CD4-positive, alpha-beta T cell (primary cell): ENCODE measurements at regions of chr19 and their contacts with region 1.

Region 1: DNA sequence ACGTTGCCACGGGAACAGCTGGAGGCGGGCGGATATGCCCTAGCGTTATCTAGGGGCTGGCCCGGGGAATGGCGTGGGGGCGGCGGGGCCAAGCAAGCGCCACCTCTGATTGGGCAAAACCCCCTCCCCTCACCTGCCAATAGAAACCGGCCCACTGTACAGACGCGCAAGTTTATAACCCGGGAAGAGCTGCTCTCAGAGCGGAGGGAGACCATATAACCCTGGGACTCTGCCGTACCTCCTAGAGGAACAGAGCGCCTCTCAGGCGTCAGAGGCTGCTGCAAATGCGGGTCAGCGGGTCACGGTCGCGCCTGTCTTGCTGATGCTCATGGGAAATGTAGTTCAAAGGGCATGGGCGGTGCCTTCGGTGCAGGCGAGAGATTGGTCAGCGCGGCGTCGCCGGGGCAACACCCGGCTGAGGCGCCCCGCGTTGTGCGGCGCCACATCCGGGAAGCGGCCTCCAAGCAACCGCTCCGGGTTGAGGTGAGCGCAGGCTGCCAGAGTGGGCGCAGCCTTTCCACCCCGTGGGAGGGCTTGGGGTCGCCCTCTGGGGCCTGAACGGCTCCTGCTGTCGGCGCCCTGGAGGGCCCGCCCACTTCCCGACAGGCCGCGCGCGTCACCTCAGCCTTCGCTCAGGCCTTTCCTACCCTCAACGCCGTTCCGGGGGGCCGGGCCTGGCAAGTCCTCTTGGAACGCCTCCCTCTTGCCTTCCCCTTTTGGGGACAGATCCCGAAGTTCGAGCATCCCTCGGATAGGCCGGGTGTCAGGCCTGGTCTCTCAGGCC is at the start of gene ZNF446:
- DNase-seq: peak; percentile 90 to 99 (median 94)
- ATAC-seq: peak; percentile 82
- H3K4me3 ChIP-seq: peak within 1 kb of the TSS; percentile 87
- H3K4me3 Mint-ChIP-seq: peak within 1 kb of the TSS; percentile 90
- H3K27ac ChIP-seq: peak within 1 kb of the TSS; percentile 76 to 95
- H3K27ac Mint-ChIP-seq: peak within 1 kb of the TSS; percentile 95
- H3K4me1 ChIP-seq: peaks cover 22% of the 10 kb centered on the region
- H3K4me1 Mint-ChIP-seq: peaks cover 23% of the 10 kb centered on the region
- H3K27me3 ChIP-seq: no peaks in the 10 kb centered on the region
- H3K27me3 Mint-ChIP-seq: no peaks in the 10 kb centered on the region
- CTCF ChIP-seq: no peak
- total RNA-seq, gene ZNF446: 13.6 to 14.6 TPM

Region 2: DNA sequence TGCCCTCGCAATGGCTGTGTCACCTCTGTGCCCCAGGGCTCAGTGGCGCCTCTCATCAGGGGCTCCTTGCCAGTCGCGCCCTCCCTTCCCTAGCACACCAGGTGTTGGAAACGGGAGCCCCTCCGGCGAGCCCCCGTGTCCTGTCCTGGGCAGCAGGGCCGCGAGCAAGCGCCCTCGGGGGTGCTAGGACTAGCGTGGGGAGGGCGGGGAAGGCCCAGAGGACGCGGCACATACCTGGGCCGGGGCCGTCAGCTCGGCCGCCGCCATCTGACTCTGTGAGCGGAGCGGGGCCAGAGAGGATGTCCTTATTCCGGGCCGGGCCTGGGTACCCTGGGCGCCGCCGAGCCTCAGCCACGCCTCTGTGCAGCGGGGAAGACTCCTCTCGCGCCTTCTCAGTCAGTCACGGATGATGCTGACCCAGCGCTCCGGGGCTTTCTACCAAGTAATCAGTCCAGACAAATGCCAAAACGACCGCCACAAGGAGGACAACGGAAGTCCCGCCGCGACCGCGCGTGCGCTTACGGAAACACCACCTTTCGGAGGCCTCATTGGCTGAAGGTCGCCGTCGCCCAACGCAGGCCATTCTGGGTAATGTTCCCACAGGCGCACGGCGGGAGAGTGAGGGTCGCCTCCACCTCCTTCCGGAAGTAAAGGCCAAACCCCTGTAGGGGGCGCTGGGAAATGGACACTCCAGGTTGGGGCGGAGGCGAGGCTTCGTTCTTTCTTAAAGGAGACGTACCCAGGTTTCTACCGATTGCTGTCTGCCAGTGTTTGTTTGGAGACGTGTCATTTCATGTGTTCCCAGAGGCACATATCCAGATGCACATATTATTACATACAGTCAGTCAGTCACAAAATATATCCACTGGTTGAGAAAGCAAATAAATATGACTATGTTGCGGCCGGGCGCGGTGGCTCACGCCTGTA is 528.4 kb before region 1 on chr19 and contains the start of gene ZNF256:
- CTCF ChIA-PET with region 1: no interaction called
- POLR2A ChIA-PET with region 1: no interaction called
- intact Hi-C with region 1: no loop called
- DNase-seq: peak; percentile 65 to 93 (median 82)
- ATAC-seq: peak; percentile 88
- H3K4me3 ChIP-seq: peak within 1 kb of the TSS; percentile 85
- H3K4me3 Mint-ChIP-seq: peak within 1 kb of the TSS; percentile 94
- H3K27ac ChIP-seq: peak within 1 kb of the TSS; percentile 61 to 82
- H3K27ac Mint-ChIP-seq: peak within 1 kb of the TSS; percentile 88
- H3K4me1 ChIP-seq: peaks cover 17% of the 10 kb centered on the region
- H3K4me1 Mint-ChIP-seq: peaks cover 21% of the 10 kb centered on the region
- H3K27me3 ChIP-seq: no peaks in the 10 kb centered on the region
- H3K27me3 Mint-ChIP-seq: no peaks in the 10 kb centered on the region
- CTCF ChIP-seq: peak; percentile 31
- total RNA-seq, gene ZNF256: 15.2 TPM

Region 3: DNA sequence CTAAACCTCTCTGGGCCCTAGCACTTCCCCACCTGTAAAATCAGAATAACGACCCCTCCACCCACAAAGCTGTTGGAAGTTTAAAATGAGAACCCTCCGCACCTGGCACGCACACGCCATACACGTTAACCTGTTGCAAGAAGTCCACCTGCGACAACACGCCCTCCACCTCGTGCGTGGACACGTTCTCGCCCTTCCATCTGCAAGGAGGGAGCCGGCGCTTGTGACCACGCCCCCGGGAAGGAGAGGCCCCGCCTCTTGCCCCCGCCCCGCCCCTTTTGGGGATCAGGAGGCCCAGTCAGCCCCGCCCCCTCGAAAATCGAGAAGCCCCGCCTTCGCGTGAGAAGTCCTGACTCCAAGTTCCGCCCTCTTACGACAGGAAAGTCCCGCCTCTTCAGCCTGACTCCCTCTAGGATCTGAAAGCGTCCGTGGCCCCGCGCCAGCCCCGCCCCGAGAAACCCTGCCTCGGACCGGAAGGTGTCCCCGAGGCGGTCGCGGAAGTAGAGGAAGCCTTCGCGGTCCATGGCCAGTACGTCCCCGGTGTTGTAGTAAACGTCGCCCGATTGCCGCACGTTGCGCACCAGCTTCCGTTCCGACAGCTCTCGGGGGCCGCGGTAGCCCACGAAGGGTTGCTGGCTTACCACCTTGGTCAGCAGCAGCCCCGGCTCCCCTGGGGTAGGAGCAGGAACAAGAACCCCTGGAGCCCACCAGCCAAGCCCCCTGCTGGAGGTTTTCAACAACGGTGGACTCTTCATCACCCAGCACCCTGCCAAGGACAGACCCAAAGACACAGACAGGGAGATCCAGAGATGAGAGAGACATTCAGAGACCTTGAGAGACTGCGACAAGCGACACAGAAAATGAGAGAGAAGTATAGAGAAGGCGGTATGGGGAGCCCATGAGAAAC is 23.4 kb after region 1 on chr19:
- CTCF ChIA-PET with region 1: no interaction called
- POLR2A ChIA-PET with region 1: no interaction called
- intact Hi-C with region 1: loop called in 1 of 2 experiments (anchors 2 kb)
- DNase-seq: peak; percentile 85 to 98 (median 92)
- ATAC-seq: peak; percentile 83
- H3K4me3 ChIP-seq: peak overlapping the region; percentile 57
- H3K4me3 Mint-ChIP-seq: peak overlapping the region; percentile 94
- H3K27ac ChIP-seq: peak overlapping the region; percentile 57 to 79
- H3K27ac Mint-ChIP-seq: peak overlapping the region; percentile 86
- H3K4me1 ChIP-seq: peaks cover 25% of the 10 kb centered on the region
- H3K4me1 Mint-ChIP-seq: peaks cover 16% of the 10 kb centered on the region
- H3K27me3 ChIP-seq: no peaks in the 10 kb centered on the region
- H3K27me3 Mint-ChIP-seq: no peaks in the 10 kb centered on the region
- CTCF ChIP-seq: no peak

Region 4: GRCh38 chr19:58531034-58531840 is 55.3 kb after region 1 on chr19:
- CTCF ChIA-PET with region 1: no interaction called
- POLR2A ChIA-PET with region 1: no interaction called
- intact Hi-C with region 1: no loop called
- DNase-seq: no peak
- ATAC-seq: no peak
- H3K4me3 ChIP-seq: no peak overlapping the region
- H3K4me3 Mint-ChIP-seq: no peak overlapping the region
- H3K27ac ChIP-seq: no peak overlapping the region
- H3K27ac Mint-ChIP-seq: no peak overlapping the region
- H3K4me1 ChIP-seq: no peaks in the 10 kb centered on the region
- H3K4me1 Mint-ChIP-seq: no peaks in the 10 kb centered on the region
- H3K27me3 ChIP-seq: no peaks in the 10 kb centered on the region
- H3K27me3 Mint-ChIP-seq: peaks cover 6% of the 10 kb centered on the region
- CTCF ChIP-seq: no peak